Lower leg skin (tissue), 4 donors: ENCODE measurements at regions of chr16 and their contacts with region 1.

Region 1: DNA sequence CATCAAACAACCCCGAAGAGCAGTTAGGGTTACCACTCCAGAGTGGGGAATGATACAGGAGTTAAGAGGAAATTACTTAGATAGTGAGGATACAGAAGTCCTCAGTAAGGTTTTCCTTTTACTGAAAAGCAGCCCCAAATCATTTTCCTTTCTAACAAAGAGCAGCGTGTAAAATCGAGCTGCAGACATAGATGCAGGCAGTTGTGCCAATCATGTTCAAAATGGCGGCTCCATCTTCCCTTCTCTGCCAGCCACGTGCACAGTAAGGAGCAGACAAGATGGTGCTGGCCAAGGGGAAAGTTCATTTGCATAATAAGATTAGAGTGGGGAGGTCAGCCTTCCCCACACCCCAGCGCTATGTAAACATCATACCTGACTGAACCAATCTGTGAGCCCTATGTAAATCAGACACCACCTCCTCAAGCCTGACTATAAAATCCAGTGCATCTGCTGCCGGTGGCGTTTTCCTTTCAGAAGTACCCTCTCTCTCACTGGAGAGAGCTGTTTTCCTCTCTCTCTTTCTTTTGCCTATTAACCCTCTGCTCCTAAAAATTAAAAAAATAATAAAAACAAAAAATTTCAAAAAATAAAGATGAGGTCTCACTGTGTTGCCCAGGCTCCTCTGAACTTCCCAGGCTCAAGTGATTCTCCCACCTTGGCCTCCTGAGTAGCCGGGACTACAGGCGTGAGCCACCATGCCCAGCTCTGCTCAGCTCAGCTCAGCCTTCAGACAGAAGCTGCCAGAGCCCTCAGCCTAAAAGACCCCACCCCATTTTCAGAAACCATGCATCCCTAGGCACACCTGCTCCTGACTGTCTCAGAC is 2.6 kb upstream of the SRL start:
- DNase-seq: no peak
- H3K4me3 ChIP-seq: no peak overlapping the region
- CTCF ChIP-seq: no peak
- POLR2A ChIP-seq: no peak

Region 2: GRCh38 chr16:4123616-4124265 is 120.7 kb before region 1 on chr16:
- intact Hi-C with region 1: loop called (anchors 10 kb)
- DNase-seq: no peak
- H3K4me3 ChIP-seq: no peak overlapping the region
- CTCF ChIP-seq: no peak
- POLR2A ChIP-seq: no peak

Region 3: DNA sequence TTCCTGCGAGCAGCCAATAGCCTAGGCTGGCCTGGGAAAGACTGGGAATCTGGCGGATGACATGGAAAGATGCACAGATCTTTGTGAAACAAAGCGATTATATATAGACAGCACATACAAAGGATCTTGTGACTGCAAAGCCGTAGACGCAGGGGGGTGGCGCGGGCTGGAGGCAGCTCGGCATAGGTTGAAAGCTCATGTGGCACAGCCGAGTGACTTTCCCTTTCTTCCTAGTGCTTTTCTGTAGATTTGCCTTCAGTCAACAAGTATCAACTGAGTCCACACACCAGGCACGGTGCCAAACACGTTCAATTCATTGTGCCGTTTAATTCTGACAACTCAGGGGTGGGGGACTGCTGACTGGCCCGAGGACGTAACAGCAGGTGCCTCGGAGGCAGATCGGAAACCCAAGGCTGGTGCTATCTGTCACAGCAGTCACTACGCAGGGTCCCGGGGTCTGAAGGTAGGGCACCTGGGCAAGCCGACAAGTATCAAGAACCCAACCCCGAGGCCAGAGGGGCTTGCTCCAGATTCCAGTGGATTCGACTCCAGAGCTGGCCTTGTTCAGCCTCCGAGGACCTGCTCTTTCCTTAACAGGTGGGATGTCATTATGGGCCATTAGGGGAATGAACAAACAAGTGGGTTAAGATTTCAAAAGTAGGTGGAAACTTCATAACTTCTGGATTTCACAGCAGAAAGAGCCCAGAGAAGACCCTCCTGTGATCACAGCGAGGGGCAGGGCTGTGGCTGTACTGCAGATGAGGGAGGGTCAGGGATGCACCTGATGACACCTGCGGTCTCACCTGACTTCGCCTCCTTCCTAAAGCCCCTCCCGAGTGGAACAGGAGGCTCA is 100.7 kb after region 1 on chr16:
- intact Hi-C with region 1: no loop called
- DNase-seq: no peak
- H3K4me3 ChIP-seq: no peak overlapping the region
- CTCF ChIP-seq: no peak
- POLR2A ChIP-seq: no peak

Region 4: DNA sequence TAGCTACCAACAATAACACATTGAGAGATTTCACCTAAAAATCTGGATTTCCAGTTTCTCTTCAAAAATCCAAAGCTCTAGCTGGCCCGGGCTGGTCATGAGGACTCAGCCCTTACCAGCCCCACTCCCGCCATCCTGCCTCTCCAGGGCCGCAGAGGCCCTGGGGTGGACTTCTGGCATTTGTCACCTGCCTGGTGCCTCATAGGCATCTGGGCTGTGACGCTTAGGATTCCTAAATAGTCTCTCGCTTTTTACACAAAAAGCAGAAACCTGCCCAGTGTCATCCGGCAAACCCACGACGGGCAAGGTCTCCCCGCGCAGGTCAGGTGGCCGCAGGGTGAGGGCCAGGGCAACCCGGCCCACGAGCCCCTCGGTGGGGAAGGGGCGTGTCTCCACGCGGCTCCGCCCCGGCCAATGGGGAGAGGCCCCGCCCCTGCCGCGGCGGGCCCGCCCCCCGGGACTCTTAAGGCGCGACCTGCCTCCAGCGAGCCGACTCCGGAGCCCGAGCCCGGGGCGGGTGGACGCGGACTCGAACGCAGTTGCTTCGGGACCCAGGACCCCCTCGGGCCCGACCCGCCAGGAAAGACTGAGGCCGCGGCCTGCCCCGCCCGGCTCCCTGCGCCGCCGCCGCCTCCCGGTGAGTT is 127.0 kb after region 1 on chr16 and contains the start of gene VASN:
- intact Hi-C with region 1: no loop called
- DNase-seq: peak; percentile 67 to 96
- H3K4me3 ChIP-seq: peak within 1 kb of the TSS; percentile 35
- CTCF ChIP-seq: no peak
- POLR2A ChIP-seq: peak in 1 of 2 donors; percentile 96
- total RNA-seq, gene VASN: 35.6 to 52.8 (median 46.7) TPM